CD8-positive, alpha-beta T cell (primary cell): ENCODE measurements at regions of chr18 and their contacts with region 1.

Region 1: DNA sequence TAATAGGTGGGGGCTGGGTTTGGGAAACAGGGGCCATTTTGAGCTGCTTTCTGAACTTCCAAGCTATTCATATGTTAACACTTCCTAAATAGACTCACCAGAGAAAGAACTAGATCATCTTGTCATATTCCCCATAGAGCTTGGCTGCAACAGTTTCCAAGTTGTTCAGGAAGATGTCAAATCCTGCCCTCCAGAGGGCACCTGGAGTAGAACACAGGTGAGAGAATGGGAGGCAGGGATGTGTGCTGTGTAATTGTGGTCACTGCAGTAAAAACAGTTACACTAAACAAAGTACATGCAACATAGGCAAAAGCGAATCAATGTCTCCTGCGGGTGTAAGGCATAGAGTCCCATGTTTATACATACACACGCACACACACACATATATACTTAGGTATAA is 34.5 kb upstream of the LRRC30 start:
- DNase-seq: no peak
- ATAC-seq: no peak
- H3K4me3 ChIP-seq: no peak overlapping the region
- H3K4me3 Mint-ChIP-seq: no peak overlapping the region
- H3K27ac ChIP-seq: no peak overlapping the region
- H3K27ac Mint-ChIP-seq: no peak overlapping the region
- H3K4me1 ChIP-seq: no peaks in the 10 kb centered on the region
- H3K4me1 Mint-ChIP-seq: no peaks in the 10 kb centered on the region
- H3K27me3 ChIP-seq: no peaks in the 10 kb centered on the region
- H3K27me3 Mint-ChIP-seq: no peaks in the 10 kb centered on the region
- CTCF ChIP-seq: no peak

Region 2: DNA sequence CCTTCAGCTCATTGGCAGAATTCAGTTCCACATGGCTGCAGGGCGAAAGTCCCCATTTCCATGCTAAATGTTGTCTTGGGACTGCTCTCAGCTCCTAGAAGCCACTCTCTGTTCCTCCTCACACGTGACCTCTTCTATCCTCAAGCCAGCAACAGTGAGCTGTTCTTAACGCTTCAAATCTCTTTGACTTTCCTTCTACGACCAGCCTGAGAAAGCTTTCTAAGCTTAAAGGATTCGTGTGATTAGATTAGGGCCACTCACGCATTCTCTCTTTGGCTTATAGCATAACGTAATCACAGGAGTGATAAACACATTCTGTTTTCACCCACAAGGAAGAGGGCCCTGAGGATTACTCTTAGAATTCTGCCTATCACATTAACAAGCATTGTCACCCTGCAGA is 49.0 kb before region 1 on chr18:
- CTCF ChIA-PET with region 1: no interaction called
- POLR2A ChIA-PET with region 1: no interaction called
- intact Hi-C with region 1: loop called in 1 of 2 experiments (anchors 10 kb)
- DNase-seq: no peak
- ATAC-seq: no peak
- H3K4me3 ChIP-seq: no peak overlapping the region
- H3K4me3 Mint-ChIP-seq: no peak overlapping the region
- H3K27ac ChIP-seq: no peak overlapping the region
- H3K27ac Mint-ChIP-seq: no peak overlapping the region
- H3K4me1 ChIP-seq: no peaks in the 10 kb centered on the region
- H3K4me1 Mint-ChIP-seq: no peaks in the 10 kb centered on the region
- H3K27me3 ChIP-seq: no peaks in the 10 kb centered on the region
- H3K27me3 Mint-ChIP-seq: no peaks in the 10 kb centered on the region
- CTCF ChIP-seq: no peak